ENCODE measurements at regions of chr1 and their contacts with region 1.

Region 1: GRCh38 chr1:19918057-19918456 is 5.4 kb downstream of the PLA2G2E start:
- DNase-seq: peak; percentile 78
- H3K4me3 ChIP-seq: no peak overlapping the region
- H3K27ac ChIP-seq: peak overlapping the region; percentile 61
- H3K4me1 ChIP-seq: peaks cover 14% of the 10 kb centered on the region
- H3K27me3 ChIP-seq: peaks cover 13% of the 10 kb centered on the region
- CTCF ChIP-seq: peak; percentile 93

Region 2: GRCh38 chr1:20151906-20152598 is 234.0 kb after region 1 on chr1:
- intact Hi-C with region 1: loop called (anchors 5 kb)
- DNase-seq: peak; percentile 87
- H3K4me3 ChIP-seq: peak overlapping the region; percentile 61
- H3K27ac ChIP-seq: peak overlapping the region; percentile 55
- H3K4me1 ChIP-seq: peaks cover 18% of the 10 kb centered on the region
- H3K27me3 ChIP-seq: peaks cover 33% of the 10 kb centered on the region
- CTCF ChIP-seq: peak; percentile 97